CD8-positive, alpha-beta T cell (primary cell): ENCODE measurements at regions of chr11 and their contacts with region 1.

Region 1: DNA sequence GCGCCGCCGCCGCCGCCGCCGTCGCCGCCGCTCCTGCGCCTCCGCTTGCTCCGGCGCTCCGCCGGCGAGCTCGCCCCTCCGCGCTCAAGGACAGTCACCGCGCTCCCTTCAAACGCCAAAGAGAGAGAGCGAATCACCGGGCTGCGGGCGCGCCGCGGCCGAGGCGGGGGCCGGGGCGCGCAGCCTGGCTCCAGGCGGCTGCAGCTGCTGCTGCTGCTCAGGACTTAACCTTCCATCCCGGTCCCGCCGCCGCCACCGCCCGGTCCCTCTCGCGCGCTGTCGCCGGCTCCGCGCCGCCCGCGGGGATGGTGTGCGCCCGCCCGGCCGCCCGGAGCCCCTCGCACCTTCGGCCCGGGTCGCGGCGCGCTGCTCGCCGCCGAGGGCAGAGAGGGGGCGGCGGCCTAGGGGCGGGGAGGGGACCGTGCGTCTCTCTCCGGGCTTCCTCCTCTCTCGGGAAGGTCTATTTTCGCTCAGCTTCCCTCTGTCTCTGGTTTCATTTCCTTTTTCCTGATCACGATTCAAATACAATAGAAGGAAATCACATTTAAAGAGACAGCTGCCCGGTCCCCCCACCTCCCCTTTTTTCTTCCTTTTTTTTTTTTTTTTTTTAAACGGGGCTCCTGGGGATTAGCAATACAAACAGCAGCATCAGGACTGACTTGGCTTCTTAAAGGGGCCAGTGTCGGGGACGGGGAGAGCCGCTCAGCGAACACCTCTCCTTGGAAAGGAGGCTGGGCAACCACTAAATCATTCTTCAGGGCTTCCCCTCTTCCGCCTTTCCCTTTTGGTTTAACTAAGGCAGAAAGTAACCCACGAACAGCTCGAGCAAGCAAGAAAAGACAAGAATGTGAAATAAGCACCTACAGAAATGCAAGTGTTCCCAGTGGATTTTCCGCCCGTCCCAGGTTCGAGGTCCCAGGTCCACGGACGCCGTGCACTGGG is 22.1 kb downstream of the LMO2 start:
- DNase-seq: peak in 3 of 9 experiments; percentile 10 to 38 (median 22)
- ATAC-seq: peak; percentile 40
- H3K4me3 ChIP-seq: peak overlapping the region; percentile 45 to 52
- H3K4me3 Mint-ChIP-seq: peak overlapping the region; percentile 90
- H3K27ac ChIP-seq: no peak overlapping the region
- H3K27ac Mint-ChIP-seq: no peak overlapping the region
- H3K4me1 ChIP-seq: peaks cover 18% of the 10 kb centered on the region
- H3K4me1 Mint-ChIP-seq: peaks cover 23% of the 10 kb centered on the region
- H3K27me3 ChIP-seq: peaks cover 14 to 26% of the 10 kb centered on the region in 2 experiments
- H3K27me3 Mint-ChIP-seq: peaks cover 64% of the 10 kb centered on the region
- CTCF ChIP-seq: no peak

Region 2: DNA sequence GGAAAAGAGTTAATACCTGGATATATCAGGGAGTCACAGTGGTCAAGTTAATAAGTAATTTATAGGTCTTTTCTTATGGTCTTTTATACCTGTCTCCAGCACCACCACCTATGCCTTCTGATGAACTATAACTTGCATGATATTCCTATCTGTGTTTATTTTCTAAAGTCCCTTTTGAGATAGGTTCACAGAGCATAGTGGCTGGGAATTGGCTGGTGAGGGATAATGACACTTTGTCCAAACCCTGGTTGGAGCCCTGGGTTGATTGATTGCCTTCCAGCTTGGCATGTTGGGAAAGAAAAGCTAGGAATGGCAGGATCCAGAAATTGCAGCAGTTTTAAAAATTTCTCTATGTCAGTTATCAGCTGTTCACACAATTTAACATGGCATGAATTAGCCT is 589.3 kb before region 1 on chr11:
- CTCF ChIA-PET with region 1: no interaction called
- POLR2A ChIA-PET with region 1: no interaction called
- intact Hi-C with region 1: no loop called
- DNase-seq: no peak
- ATAC-seq: no peak
- H3K4me3 ChIP-seq: no peak overlapping the region
- H3K4me3 Mint-ChIP-seq: no peak overlapping the region
- H3K27ac ChIP-seq: no peak overlapping the region
- H3K27ac Mint-ChIP-seq: no peak overlapping the region
- H3K4me1 ChIP-seq: no peaks in the 10 kb centered on the region
- H3K4me1 Mint-ChIP-seq: peaks cover 63% of the 10 kb centered on the region
- H3K27me3 ChIP-seq: no peaks in the 10 kb centered on the region
- H3K27me3 Mint-ChIP-seq: no peaks in the 10 kb centered on the region
- CTCF ChIP-seq: no peak

Region 3: DNA sequence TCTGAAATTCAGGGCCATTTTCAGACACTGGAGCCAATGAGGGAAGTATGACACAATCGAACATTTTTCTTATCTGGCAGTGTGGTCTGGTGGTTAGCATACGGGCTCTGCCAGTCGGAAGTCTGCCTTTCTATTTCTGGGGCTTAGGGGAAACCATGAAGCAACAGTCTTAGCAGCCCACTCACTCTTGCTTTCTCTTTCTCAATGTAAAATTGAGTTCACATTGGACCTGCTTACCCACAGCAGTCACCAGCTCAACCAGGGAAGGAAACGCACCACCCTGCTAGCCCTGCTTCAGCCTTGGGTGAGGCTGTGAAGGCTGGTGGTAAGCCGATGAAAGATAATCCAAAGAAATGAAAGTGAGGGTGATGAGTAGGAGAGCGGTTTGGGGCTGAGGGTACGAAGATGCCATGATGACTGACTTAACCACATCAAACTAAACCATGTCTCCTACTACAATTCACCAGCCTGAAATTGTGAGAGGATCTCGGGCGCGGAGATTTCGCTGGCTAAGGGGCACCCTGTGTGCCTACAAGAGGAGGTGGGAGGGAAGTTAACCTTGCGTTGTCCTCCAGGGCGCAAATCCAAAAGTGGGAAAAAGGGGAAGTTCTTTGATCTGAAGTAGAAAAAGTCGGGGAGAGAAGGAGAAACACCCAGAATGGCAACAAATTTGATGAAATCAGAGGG is 24.1 kb after region 1 on chr11:
- CTCF ChIA-PET with region 1: no interaction called
- POLR2A ChIA-PET with region 1: interaction called, 3 read pairs
- intact Hi-C with region 1: loop called in 1 of 2 experiments (anchors 1 kb)
- DNase-seq: peak; percentile 25 to 85 (median 63)
- ATAC-seq: peak; percentile 89
- H3K4me3 ChIP-seq: peak overlapping the region; percentile 40
- H3K4me3 Mint-ChIP-seq: peak overlapping the region; percentile 73
- H3K27ac ChIP-seq: peak overlapping the region; percentile 0 to 31
- H3K27ac Mint-ChIP-seq: peak overlapping the region; percentile 66
- H3K4me1 ChIP-seq: peaks cover 39% of the 10 kb centered on the region
- H3K4me1 Mint-ChIP-seq: peaks cover 45% of the 10 kb centered on the region
- H3K27me3 ChIP-seq: peaks cover 6 to 10% of the 10 kb centered on the region in 2 experiments
- H3K27me3 Mint-ChIP-seq: peaks cover 46% of the 10 kb centered on the region
- CTCF ChIP-seq: no peak

Region 4: GRCh38 chr11:34134765-34135164 is 265.0 kb after region 1 on chr11:
- CTCF ChIA-PET with region 1: no interaction called
- POLR2A ChIA-PET with region 1: no interaction called
- intact Hi-C with region 1: no loop called
- DNase-seq: no peak
- ATAC-seq: no peak
- H3K4me3 ChIP-seq: no peak overlapping the region
- H3K4me3 Mint-ChIP-seq: no peak overlapping the region
- H3K27ac ChIP-seq: no peak overlapping the region
- H3K27ac Mint-ChIP-seq: no peak overlapping the region
- H3K4me1 ChIP-seq: no peaks in the 10 kb centered on the region
- H3K4me1 Mint-ChIP-seq: no peaks in the 10 kb centered on the region
- H3K27me3 ChIP-seq: no peaks in the 10 kb centered on the region
- H3K27me3 Mint-ChIP-seq: no peaks in the 10 kb centered on the region
- CTCF ChIP-seq: no peak